Sigmoid colon (tissue), 7 donors: ENCODE measurements at regions of chr4 and their contacts with region 1.

Region 1: DNA sequence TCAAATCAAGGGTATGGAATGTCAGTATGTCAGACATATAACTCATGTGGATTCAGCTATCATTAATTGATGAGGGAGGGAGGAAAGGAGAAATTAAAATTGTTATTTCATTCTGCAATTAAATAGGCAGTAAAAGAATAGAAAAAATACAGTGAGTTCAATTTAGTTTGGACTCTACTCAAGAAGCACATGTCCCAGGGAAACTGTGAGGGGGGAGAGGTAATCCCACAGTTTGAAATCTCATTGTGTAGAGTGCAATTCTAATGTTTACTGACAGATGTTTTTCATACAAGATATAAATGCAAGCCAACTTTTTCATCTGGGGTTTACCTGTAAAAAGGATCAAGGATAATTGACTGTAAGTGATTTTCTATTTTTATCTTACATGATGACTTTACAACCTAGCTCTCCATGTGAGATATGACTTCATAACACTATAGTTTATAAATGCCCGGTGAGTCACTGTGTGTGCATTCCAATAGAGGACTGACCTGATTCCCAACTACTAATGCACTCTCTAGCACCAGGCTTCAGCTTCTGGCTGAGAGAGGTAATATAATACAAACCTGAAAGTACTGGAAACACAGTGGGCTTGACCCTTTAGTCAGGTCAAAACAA is 35.2 kb upstream of the SCD5 start:
- DNase-seq: no peak
- H3K4me3 ChIP-seq: no peak overlapping the region
- H3K27ac ChIP-seq: peak overlapping the region; percentile 23 to 71 (median 60)
- H3K4me1 ChIP-seq: peaks cover 0 to 19% (median 11%) of the 10 kb centered on the region in 4 donors
- H3K27me3 ChIP-seq: no peaks in the 10 kb centered on the region
- CTCF ChIP-seq: peak in 1 of 4 experiments; percentile 15
- EP300 ChIP-seq: peak in 1 of 4 donors; percentile 27
- POLR2A ChIP-seq: no peak

Region 2: GRCh38 chr4:82865592-82865991 is 31.8 kb after region 1 on chr4:
- intact Hi-C with region 1: no loop called
- DNase-seq: no peak
- H3K4me3 ChIP-seq: no peak overlapping the region
- H3K27ac ChIP-seq: peak overlapping the region in 3 of 4 donors; percentile 26 to 57 (median 53)
- H3K4me1 ChIP-seq: peaks cover 0 to 6% (median 3%) of the 10 kb centered on the region in 4 donors
- H3K27me3 ChIP-seq: no peaks in the 10 kb centered on the region
- CTCF ChIP-seq: no peak
- EP300 ChIP-seq: no peak
- POLR2A ChIP-seq: no peak

Region 3: GRCh38 chr4:82890901-82891706 is 57.3 kb after region 1 on chr4 and contains the start of gene SEC31A:
- intact Hi-C with region 1: loop called (anchors 10 kb)
- DNase-seq: peak; percentile 97
- H3K4me3 ChIP-seq: peak within 1 kb of the TSS; percentile 85 to 98 (median 88)
- H3K27ac ChIP-seq: peak within 1 kb of the TSS; percentile 98 to 99 (median 98)
- H3K4me1 ChIP-seq: peaks cover 0 to 39% (median 30%) of the 10 kb centered on the region in 4 donors
- H3K27me3 ChIP-seq: no peaks in the 10 kb centered on the region
- CTCF ChIP-seq: peak in 1 of 4 experiments; percentile 16
- EP300 ChIP-seq: peak in 2 of 4 donors; percentile 53 to 71
- POLR2A ChIP-seq: peak; percentile 89 to 92
- total RNA-seq, gene SEC31A: 121 to 197 (median 132) TPM